ENCODE measurements at regions of chr14 and their contacts with region 1.

Region 1: GRCh38 chr14:67514650-67515385 is 18.3 kb upstream of the PLEKHH1 start:
- DNase-seq: peak in 9 of 10 donors; percentile 34 to 93 (median 47)

Region 2: GRCh38 chr14:67435615-67436346 is 79.0 kb before region 1 on chr14:
- intact Hi-C with region 1: loop called (anchors 5 kb)
- DNase-seq: peak in 3 of 10 donors; percentile 16 to 40 (median 22)

Region 3: DNA sequence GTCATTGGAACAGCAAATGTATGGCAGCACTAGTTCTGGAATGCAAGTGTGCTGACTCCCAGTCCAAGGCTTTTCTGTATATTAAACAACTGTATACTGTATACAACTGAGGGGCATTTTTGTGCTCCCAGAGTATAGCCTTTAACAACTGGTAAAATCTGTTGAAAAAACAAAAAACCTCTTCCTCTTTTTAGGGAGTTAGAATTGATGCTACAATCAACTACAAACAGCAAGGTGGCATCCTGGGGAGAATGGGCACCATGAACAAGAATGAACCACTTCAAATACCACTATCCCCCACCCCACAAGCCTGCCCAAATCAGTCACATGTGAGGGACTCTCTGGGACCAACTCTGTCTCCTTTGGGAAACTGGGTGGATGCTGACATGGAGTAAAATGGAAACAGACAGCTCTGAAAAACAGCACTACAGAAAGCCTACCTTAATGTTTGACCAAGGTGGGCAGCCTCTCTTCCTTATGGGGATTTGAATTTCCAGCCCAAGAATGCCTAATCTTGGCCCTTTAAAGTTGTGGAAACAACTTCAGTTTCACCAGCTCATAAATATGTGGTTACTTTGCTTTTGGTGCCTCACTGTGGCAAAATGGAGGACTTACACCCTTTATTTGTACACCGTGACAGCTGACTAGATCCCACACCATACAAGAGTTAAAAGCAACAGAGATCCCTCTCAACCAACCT is 152.1 kb after region 1 on chr14:
- intact Hi-C with region 1: loop called (anchors 5 kb)
- DNase-seq: peak in 1 of 10 donors; percentile 12

Region 4: DNA sequence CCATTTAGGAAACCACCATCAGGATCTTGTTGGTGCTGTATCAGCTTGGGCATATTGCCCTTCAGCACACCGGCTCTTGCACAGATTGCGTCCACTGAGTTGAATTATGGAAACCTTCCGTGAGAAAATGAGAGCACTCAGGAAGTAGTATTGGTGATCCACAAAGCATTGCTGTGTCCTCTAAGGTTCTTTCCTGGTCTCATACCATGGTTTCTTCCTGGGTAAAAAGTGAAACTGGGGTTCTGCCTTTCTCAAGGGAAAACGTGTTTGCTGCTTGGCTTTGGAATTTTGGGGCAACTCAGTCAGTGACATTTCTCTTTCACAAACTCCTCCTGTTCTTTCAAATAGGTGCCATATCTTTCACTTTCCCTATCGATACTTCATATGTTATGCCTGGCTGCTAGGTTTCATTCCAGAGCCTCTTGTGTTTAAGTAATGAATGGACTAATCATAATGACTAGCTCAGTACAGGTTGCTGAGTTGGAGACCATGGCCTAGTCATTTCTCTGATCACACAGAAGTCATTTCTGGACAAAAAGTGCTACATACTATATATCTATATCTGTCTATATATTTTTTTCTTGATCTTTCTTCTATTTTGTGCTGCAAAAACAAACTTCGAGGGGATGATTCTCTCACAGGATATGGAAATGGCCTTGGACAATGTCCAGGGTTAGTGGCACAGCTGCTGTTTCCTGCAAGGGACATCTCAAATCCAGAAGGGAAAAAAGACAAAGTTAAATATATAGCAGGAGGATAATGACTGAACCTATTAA is 854.7 kb after region 1 on chr14:
- intact Hi-C with region 1: no loop called
- DNase-seq: no peak

Measured in posterior cingulate gyrus (tissue), 11 donors.